ENCODE measurements at regions of chr2 and their contacts with region 1.

Region 1: GRCh38 chr2:200306196-200306930 is at the start of gene SPATS2L:
- DNase-seq: no peak
- ATAC-seq: peak; percentile 73
- H3K4me3 ChIP-seq: peak within 1 kb of the TSS; percentile 73
- H3K27ac ChIP-seq: peak within 1 kb of the TSS; percentile 70
- H3K4me1 ChIP-seq: peaks cover 4% of the 10 kb centered on the region; the same call in 1 of the 2 replicates
- H3K27me3 ChIP-seq: no peaks in the 10 kb centered on the region
- CTCF ChIP-seq: no peak
- EP300 ChIP-seq: no peak
- POLR2A ChIP-seq: peak; percentile 39
- RAD21 ChIP-seq: no peak
- polyA plus RNA-seq, gene SPATS2L: 5.2 to 8.0 TPM

Region 2: GRCh38 chr2:200189964-200190363 is 116.4 kb before region 1 on chr2:
- CTCF ChIA-PET with region 1: no interaction called
- POLR2A ChIA-PET with region 1: no interaction called
- RAD21 ChIA-PET with region 1: no interaction called
- SMC1A ChIA-PET with region 1: no interaction called
- in situ Hi-C with region 1: no loop called
- intact Hi-C with region 1: no loop called
- DNase-seq: no peak
- ATAC-seq: no peak
- H3K4me3 ChIP-seq: no peak overlapping the region
- H3K27ac ChIP-seq: no peak overlapping the region
- H3K4me1 ChIP-seq: no peaks in the 10 kb centered on the region
- H3K27me3 ChIP-seq: peaks cover 0 to 2% of the 10 kb centered on the region in 2 experiments; a peak in 2 of 4 replicates
- CTCF ChIP-seq: no peak
- EP300 ChIP-seq: no peak
- POLR2A ChIP-seq: no peak
- RAD21 ChIP-seq: no peak

Region 3: DNA sequence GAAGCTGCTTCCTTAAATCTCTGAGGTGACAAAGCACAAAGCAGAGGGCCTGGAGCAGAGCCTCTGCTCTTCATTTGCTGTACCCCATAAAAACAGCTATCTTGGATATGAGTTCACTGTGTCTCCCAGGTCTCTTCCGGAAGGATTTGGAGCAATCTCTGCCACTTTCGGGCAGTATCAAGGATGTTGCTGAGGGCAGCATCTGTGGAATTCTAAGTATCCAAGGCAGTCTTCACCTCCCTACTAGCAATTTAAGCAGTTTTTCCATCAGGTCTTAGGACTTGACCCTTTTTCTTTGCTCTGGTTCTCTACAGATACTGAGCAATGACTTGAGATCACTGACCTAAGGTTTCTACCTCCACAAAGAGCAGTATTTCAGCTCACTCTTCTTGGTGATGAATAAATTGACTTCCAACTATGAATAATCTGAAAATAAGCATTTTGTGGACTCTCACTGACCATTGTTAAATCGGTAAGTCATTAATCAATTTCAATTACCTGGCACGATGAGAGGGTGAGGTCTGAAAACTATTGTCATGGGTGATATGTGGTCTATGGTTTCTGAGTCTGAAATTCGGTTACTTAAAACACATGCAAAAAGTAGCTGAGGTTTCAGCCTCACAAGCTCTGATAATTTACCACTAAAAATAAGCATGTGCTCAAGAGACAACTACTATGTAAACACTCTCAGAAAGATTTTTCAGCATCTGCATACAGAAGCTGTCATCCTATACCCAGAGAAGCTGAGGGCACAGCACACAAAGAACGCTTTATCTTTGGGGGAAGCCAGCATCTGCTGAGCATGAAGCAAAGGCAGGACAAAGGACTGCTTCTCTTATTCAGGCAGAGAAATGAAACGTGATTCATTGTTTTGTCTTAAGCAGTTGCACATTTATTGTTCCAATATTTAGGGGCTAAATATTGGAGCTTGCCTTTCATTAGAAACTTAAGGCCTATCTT is 32.0 kb before region 1 on chr2:
- CTCF ChIA-PET with region 1: no interaction called
- POLR2A ChIA-PET with region 1: no interaction called
- RAD21 ChIA-PET with region 1: no interaction called
- SMC1A ChIA-PET with region 1: no interaction called
- in situ Hi-C with region 1: no loop called
- intact Hi-C with region 1: no loop called
- DNase-seq: peak; percentile 8
- ATAC-seq: peak; percentile 59
- H3K4me3 ChIP-seq: no peak overlapping the region
- H3K27ac ChIP-seq: no peak overlapping the region
- H3K4me1 ChIP-seq: no peaks in the 10 kb centered on the region
- H3K27me3 ChIP-seq: no peaks in the 10 kb centered on the region; a peak in 1 of 4 replicates
- CTCF ChIP-seq: no peak
- EP300 ChIP-seq: no peak
- POLR2A ChIP-seq: no peak
- RAD21 ChIP-seq: no peak

Region 4: DNA sequence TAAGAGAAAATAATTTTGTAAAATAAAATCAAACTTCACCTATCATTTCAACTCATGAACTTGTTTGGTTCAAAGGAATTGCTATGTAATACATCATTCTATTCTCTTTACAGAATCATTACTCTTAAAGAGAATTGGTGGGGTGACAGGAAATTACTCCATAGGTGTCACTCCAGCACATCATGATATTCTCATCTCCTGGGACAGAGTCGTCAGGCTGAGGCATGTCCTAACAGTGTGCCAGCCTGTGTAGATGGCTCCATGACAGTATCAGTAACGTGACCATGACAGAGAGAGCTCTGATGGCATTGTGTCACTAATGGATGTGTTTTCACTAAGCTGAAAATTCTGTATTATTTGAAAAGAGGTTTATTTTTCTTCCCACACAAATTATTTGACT is 14.0 kb after region 1 on chr2:
- CTCF ChIA-PET with region 1: interaction called, 3 read pairs
- POLR2A ChIA-PET with region 1: interaction called, 3 read pairs
- RAD21 ChIA-PET with region 1: interaction called, 3 read pairs
- SMC1A ChIA-PET with region 1: interaction called, 16 read pairs
- in situ Hi-C with region 1: no loop called
- intact Hi-C with region 1: no loop called
- DNase-seq: no peak
- ATAC-seq: peak; percentile 33; the same call in 1 of the 3 replicates
- H3K4me3 ChIP-seq: no peak overlapping the region
- H3K27ac ChIP-seq: no peak overlapping the region
- H3K4me1 ChIP-seq: peaks cover 3% of the 10 kb centered on the region; the same call in 1 of the 2 replicates
- H3K27me3 ChIP-seq: no peaks in the 10 kb centered on the region
- CTCF ChIP-seq: no peak
- EP300 ChIP-seq: no peak
- POLR2A ChIP-seq: no peak
- RAD21 ChIP-seq: no peak

Region 5: GRCh38 chr2:200373973-200374416 is 67.6 kb after region 1 on chr2:
- CTCF ChIA-PET with region 1: interaction called, 4 read pairs
- POLR2A ChIA-PET with region 1: no interaction called
- RAD21 ChIA-PET with region 1: interaction called, 3 read pairs
- SMC1A ChIA-PET with region 1: interaction called, 6 read pairs
- in situ Hi-C with region 1: no loop called
- intact Hi-C with region 1: loop called (anchors 5 kb)
- DNase-seq: peak; percentile 68
- ATAC-seq: peak; percentile 96
- H3K4me3 ChIP-seq: peak overlapping the region; percentile 52
- H3K27ac ChIP-seq: peak overlapping the region; percentile 68
- H3K4me1 ChIP-seq: peaks cover 30% of the 10 kb centered on the region
- H3K27me3 ChIP-seq: no peaks in the 10 kb centered on the region
- CTCF ChIP-seq: no peak
- EP300 ChIP-seq: no peak; a peak in 1 of 4 replicates
- POLR2A ChIP-seq: no peak
- RAD21 ChIP-seq: no peak

Region 6: DNA sequence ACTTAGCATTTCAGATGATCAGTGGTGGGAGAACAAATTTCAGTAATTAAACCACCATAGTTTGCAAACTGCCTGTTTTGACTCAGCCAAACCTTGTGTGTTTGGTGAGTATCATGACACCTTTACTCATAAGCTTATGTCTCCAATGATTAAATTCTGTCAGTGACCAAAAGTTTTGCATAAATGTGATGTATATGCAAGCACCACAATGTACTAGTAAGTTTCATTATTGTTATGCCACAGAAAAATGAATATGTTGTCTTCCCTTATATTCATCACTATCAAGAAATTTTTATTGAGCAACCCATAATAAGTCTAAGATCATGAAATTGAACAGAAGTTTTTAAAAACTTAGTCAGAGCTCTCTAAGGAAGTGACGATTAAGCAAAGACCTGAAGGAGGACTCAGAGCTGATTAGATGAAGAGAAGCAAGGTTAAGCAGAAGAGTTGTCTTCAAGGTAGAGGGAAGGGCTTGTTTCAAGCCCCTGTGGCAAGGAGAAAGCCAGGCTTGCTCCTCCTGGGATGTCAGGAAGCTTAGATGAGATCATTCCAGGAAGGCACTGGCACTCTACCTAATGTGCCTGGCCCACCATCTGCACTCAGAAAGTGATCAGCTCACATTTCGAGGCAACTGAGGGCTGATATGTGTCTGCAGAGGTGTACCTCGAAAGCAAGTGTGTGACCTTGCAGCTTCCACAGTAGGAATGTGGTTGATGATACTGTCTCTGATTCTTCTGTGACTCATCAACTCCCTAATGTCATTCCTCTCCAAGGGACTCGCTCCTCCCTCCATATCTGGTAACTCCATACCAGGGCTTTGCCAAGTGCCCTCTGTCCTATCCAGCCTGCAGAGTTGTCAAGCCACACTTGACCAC is 148.8 kb after region 1 on chr2:
- CTCF ChIA-PET with region 1: interaction called, 3 read pairs
- POLR2A ChIA-PET with region 1: no interaction called
- RAD21 ChIA-PET with region 1: interaction called, 3 read pairs
- SMC1A ChIA-PET with region 1: interaction called, 3 read pairs
- in situ Hi-C with region 1: no loop called
- intact Hi-C with region 1: loop called (anchors 5 kb)
- DNase-seq: peak; percentile 66
- ATAC-seq: peak; percentile 77
- H3K4me3 ChIP-seq: no peak overlapping the region
- H3K27ac ChIP-seq: peak overlapping the region; percentile 30; the same call in 1 of the 2 replicates
- H3K4me1 ChIP-seq: peaks cover 17% of the 10 kb centered on the region
- H3K27me3 ChIP-seq: no peaks in the 10 kb centered on the region
- CTCF ChIP-seq: no peak
- EP300 ChIP-seq: peak; percentile 82 to 86; a peak in 3 of 4 replicates
- POLR2A ChIP-seq: no peak
- RAD21 ChIP-seq: no peak

Region 7: DNA sequence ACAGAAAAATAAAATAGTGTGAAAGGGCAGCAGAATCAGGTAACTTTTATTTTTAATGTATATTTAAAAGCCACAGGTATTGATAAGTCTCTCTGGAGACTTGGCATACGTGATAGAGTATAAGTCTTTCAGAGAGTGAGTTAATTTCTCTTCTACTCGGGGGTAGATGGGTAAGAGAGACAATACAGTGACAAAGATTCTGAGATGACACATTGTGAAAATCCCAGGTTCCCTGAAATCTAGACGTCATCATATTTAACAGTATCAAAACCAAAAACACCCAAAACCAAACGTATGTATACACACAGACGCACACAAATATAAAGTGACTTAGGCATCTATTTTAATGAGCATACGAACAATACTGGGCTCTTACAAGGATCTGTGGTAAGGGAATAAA is 616.1 kb after region 1 on chr2:
- CTCF ChIA-PET with region 1: no interaction called
- POLR2A ChIA-PET with region 1: no interaction called
- RAD21 ChIA-PET with region 1: no interaction called
- SMC1A ChIA-PET with region 1: no interaction called
- in situ Hi-C with region 1: no loop called
- intact Hi-C with region 1: no loop called
- DNase-seq: no peak
- ATAC-seq: no peak
- H3K4me3 ChIP-seq: no peak overlapping the region
- H3K27ac ChIP-seq: no peak overlapping the region
- H3K4me1 ChIP-seq: no peaks in the 10 kb centered on the region
- H3K27me3 ChIP-seq: no peaks in the 10 kb centered on the region
- CTCF ChIP-seq: no peak
- EP300 ChIP-seq: no peak
- POLR2A ChIP-seq: no peak
- RAD21 ChIP-seq: no peak